ENCODE measurements at regions of chr18 and their contacts with region 1.

Region 1: GRCh38 chr18:37230768-37231167 is 334.8 kb downstream of the CELF4 start:
- DNase-seq: no peak
- H3K4me3 ChIP-seq: no peak overlapping the region
- H3K27me3 ChIP-seq: no peaks in the 10 kb centered on the region
- CTCF ChIP-seq: no peak

Region 2: GRCh38 chr18:37218022-37218590 is 12.7 kb before region 1 on chr18:
- CTCF ChIA-PET with region 1: no interaction called
- POLR2A ChIA-PET with region 1: interaction called, 10 read pairs
- DNase-seq: no peak
- H3K4me3 ChIP-seq: no peak overlapping the region
- H3K27me3 ChIP-seq: no peaks in the 10 kb centered on the region
- CTCF ChIP-seq: no peak

Region 3: GRCh38 chr18:37321589-37322491 is 91.1 kb after region 1 on chr18:
- CTCF ChIA-PET with region 1: no interaction called
- POLR2A ChIA-PET with region 1: no interaction called
- DNase-seq: no peak
- H3K4me3 ChIP-seq: no peak overlapping the region
- H3K27me3 ChIP-seq: peaks cover 4% of the 10 kb centered on the region
- CTCF ChIP-seq: no peak

Measured in BJ (cell line).